CD4-positive, alpha-beta memory T cell (primary cell): ENCODE measurements at regions of chr2 and their contacts with region 1.

Region 1: DNA sequence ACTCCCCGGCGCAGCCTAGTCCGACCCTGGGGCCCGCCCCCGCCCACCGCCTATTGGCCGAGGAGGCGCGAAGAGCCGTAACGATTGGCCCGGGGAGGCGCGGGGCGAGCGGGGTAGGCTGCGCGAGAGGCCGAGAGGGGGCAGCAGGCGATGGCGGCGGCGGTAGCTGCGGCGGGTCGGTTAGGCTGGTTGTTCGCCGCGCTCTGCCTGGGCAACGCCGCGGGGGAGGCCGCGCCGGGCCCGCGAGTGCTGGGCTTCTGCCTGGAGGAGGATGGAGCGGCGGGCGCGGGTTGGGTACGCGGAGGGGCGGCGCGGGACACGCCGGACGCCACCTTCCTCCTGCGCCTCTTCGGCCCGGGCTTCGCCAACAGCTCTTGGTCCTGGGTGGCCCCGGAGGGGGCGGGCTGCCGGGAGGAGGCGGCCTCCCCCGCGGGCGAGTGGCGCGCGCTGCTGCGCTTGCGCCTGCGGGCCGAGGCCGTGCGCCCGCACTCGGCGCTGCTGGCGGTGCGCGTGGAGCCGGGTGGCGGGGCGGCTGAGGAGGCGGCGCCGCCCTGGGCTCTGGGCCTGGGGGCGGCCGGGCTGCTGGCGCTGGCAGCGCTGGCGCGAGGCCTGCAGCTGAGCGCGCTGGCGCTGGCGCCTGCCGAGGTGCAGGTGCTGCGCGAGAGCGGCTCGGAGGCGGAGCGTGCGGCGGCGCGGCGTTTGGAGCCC is at the start of gene CNNM3:
- DNase-seq: peak; percentile 93 to 97 (median 94)
- H3K4me3 ChIP-seq: peak within 1 kb of the TSS; percentile 82 to 83
- H3K4me3 Mint-ChIP-seq: peak within 1 kb of the TSS; percentile 93 to 97 (median 95)
- H3K27ac ChIP-seq: peak within 1 kb of the TSS; percentile 77
- H3K27ac Mint-ChIP-seq: peak within 1 kb of the TSS; percentile 74 to 96 (median 93)
- H3K4me1 ChIP-seq: peaks cover 57% of the 10 kb centered on the region
- H3K4me1 Mint-ChIP-seq: peaks cover 50 to 76% (median 61%) of the 10 kb centered on the region in 4 donors
- H3K27me3 ChIP-seq: no peaks in the 10 kb centered on the region
- H3K27me3 Mint-ChIP-seq: no peaks in the 10 kb centered on the region
- total RNA-seq, gene CNNM3: 55.1 to 57.4 TPM

Region 2: GRCh38 chr2:96638144-96639121 is 177.8 kb before region 1 on chr2 and contains the start of gene KANSL3:
- CTCF ChIA-PET with region 1: no interaction called
- POLR2A ChIA-PET with region 1: interaction called, 11 read pairs
- intact Hi-C with region 1: no loop called
- DNase-seq: peak; percentile 86 to 93 (median 89)
- H3K4me3 ChIP-seq: peak within 1 kb of the TSS; percentile 79 to 92
- H3K4me3 Mint-ChIP-seq: peak within 1 kb of the TSS; percentile 94 to 100 (median 96)
- H3K27ac ChIP-seq: peak within 1 kb of the TSS; percentile 77
- H3K27ac Mint-ChIP-seq: peak within 1 kb of the TSS; percentile 95 to 99 (median 97)
- H3K4me1 ChIP-seq: peaks cover 39% of the 10 kb centered on the region
- H3K4me1 Mint-ChIP-seq: peaks cover 26 to 42% (median 35%) of the 10 kb centered on the region in 4 donors
- H3K27me3 ChIP-seq: no peaks in the 10 kb centered on the region
- H3K27me3 Mint-ChIP-seq: peaks cover 0 to 2% of the 10 kb centered on the region in 2 donors
- total RNA-seq, gene KANSL3: 63.3 to 69.7 TPM

Region 3: GRCh38 chr2:96692086-96692971 is 124.0 kb before region 1 on chr2:
- CTCF ChIA-PET with region 1: no interaction called
- POLR2A ChIA-PET with region 1: no interaction called
- intact Hi-C with region 1: no loop called
- DNase-seq: no peak
- H3K4me3 ChIP-seq: no peak overlapping the region
- H3K4me3 Mint-ChIP-seq: no peak overlapping the region
- H3K27ac ChIP-seq: no peak overlapping the region
- H3K27ac Mint-ChIP-seq: peak overlapping the region in 2 of 7 donors; percentile 25 to 29
- H3K4me1 ChIP-seq: no peaks in the 10 kb centered on the region
- H3K4me1 Mint-ChIP-seq: no peaks in the 10 kb centered on the region
- H3K27me3 ChIP-seq: no peaks in the 10 kb centered on the region
- H3K27me3 Mint-ChIP-seq: no peaks in the 10 kb centered on the region

Region 4: DNA sequence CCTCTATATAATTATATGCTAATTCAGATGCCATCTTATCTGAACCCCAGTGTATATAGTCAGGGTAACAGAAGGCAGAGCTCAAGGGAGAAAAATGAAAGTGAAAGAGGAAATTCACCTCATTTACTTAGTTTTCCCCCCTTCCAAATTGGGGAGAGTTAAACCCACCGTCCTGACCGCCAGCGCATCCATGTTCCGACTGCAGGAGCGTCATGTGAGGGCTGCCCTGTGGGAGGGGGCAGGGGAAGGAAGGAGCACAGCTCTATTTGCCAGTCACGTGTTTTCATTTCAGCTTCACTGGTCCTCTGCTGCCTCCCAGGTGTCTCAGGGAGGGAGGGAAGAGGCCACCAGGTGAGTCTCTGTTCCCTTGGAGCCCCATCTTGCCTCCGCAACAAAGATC is 42.4 kb before region 1 on chr2:
- CTCF ChIA-PET with region 1: interaction called, 11 read pairs
- POLR2A ChIA-PET with region 1: interaction called, 17 read pairs
- intact Hi-C with region 1: no loop called
- DNase-seq: peak; percentile 54 to 82 (median 64)
- H3K4me3 ChIP-seq: peak overlapping the region; percentile 63 to 77
- H3K4me3 Mint-ChIP-seq: peak overlapping the region; percentile 91 to 96 (median 92)
- H3K27ac ChIP-seq: peak overlapping the region; percentile 59
- H3K27ac Mint-ChIP-seq: peak overlapping the region; percentile 85 to 97 (median 93)
- H3K4me1 ChIP-seq: peaks cover 18% of the 10 kb centered on the region
- H3K4me1 Mint-ChIP-seq: peaks cover 17 to 35% (median 21%) of the 10 kb centered on the region in 4 donors
- H3K27me3 ChIP-seq: no peaks in the 10 kb centered on the region
- H3K27me3 Mint-ChIP-seq: no peaks in the 10 kb centered on the region

Region 5: DNA sequence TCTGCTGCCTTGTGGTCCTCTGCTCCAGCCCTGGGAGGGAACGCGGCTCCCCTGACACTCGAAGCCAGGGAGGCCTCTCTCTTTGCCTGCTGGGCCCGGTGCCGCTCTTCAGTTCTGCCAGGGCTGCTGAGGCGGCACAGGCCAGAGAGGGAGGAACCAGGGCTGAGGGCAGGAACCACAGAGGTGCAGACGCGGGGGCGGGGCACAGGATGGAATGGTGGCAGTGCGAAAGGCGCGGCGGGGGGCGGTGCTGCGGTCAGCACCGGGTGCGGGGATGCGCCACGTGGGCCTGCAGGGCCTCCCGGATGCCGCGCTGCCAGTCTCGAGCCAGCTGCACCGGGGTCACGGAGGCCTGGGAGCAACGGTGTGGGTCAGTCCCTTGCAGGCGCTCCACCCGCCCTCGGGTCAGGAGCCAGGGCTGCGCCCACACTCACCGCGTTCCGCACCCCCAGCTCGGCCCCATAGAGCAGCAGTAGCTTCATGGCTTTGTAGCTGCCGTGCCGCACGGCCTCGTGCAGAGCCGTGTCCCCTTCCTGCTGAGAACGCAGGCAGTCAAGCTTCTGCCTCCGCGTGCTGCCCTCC is 23.1 kb after region 1 on chr2:
- CTCF ChIA-PET with region 1: interaction called, 3 read pairs
- POLR2A ChIA-PET with region 1: interaction called, 80 read pairs
- intact Hi-C with region 1: loop called (anchors 1 kb)
- DNase-seq: peak; percentile 84 to 89 (median 85)
- H3K4me3 ChIP-seq: peak overlapping the region in 1 of 2 donors; percentile 33
- H3K4me3 Mint-ChIP-seq: peak overlapping the region; percentile 45 to 80 (median 73)
- H3K27ac ChIP-seq: peak overlapping the region; percentile 55
- H3K27ac Mint-ChIP-seq: peak overlapping the region; percentile 74 to 95 (median 89)
- H3K4me1 ChIP-seq: peaks cover 22% of the 10 kb centered on the region
- H3K4me1 Mint-ChIP-seq: peaks cover 7 to 29% (median 19%) of the 10 kb centered on the region in 4 donors
- H3K27me3 ChIP-seq: no peaks in the 10 kb centered on the region
- H3K27me3 Mint-ChIP-seq: no peaks in the 10 kb centered on the region